ENCODE measurements at regions of chr4 and their contacts with region 1.

Region 1: DNA sequence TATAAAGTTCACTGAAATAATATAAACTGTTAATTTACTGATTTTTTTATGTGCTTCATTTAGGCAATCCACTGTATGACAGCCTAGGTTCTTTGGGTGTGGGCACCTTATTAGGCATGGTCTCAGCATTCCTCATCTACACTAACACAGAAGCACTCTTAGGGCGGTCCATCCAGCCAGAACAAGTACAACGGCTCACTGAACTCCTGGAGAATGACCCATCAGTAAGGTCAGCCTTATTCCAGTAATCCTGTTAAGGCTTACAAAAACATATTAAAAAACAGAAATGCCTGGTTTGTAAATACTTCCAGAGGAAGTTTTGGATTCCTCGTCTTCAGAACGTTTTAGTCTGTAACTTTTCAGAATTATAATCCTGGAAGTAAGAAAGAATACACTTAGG is 80.1 kb downstream of the SLC30A9 start:
- DNase-seq: no peak
- H3K4me3 ChIP-seq: no peak overlapping the region
- H3K27ac ChIP-seq: no peak overlapping the region
- H3K4me1 ChIP-seq: no peaks in the 10 kb centered on the region
- H3K27me3 ChIP-seq: no peaks in the 10 kb centered on the region
- CTCF ChIP-seq: no peak

Region 2: GRCh38 chr4:41384992-41385391 is 685.5 kb before region 1 on chr4:
- CTCF ChIA-PET with region 1: no interaction called
- POLR2A ChIA-PET with region 1: no interaction called
- intact Hi-C with region 1: no loop called
- DNase-seq: no peak
- H3K4me3 ChIP-seq: no peak overlapping the region
- H3K27ac ChIP-seq: no peak overlapping the region
- H3K4me1 ChIP-seq: no peaks in the 10 kb centered on the region
- H3K27me3 ChIP-seq: no peaks in the 10 kb centered on the region
- CTCF ChIP-seq: no peak

Region 3: GRCh38 chr4:42088386-42088785 is 17.9 kb after region 1 on chr4:
- CTCF ChIA-PET with region 1: no interaction called
- POLR2A ChIA-PET with region 1: interaction called, 13 read pairs
- intact Hi-C with region 1: no loop called
- DNase-seq: no peak
- H3K4me3 ChIP-seq: no peak overlapping the region
- H3K27ac ChIP-seq: no peak overlapping the region
- H3K4me1 ChIP-seq: no peaks in the 10 kb centered on the region
- H3K27me3 ChIP-seq: no peaks in the 10 kb centered on the region
- CTCF ChIP-seq: no peak

Measured in PC-9 (cell line).